OCI-LY7 (cell line): ENCODE measurements at regions of chr9 and their contacts with region 1.

Region 1: DNA sequence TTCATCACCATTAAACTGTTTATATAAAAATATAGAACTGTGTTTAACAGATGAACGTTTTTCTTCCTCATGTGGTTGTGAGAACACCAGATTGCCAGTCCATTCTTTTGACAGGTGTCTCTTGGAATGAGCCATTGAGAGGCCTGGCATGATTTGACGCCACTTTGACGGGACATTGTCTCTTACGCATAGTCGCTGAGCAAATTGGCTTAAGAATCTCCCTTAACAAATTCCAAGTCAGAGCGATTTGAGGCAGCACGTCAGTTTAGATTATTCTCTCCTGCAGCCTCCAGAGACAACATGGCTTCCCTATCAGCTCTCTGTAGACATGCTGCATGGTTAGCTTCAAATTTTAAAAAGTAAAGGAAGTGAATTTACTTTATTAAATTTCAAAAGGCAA is 510.7 kb upstream of the ACO1 start:
- DNase-seq: no peak
- H3K4me3 ChIP-seq: no peak overlapping the region
- H3K27ac ChIP-seq: no peak overlapping the region
- H3K4me1 ChIP-seq: no peaks in the 10 kb centered on the region
- CTCF ChIP-seq: no peak

Region 2: GRCh38 chr9:31389075-31389474 is 484.6 kb before region 1 on chr9:
- CTCF ChIA-PET with region 1: no interaction called
- POLR2A ChIA-PET with region 1: no interaction called
- intact Hi-C with region 1: loop called (anchors 5 kb)
- DNase-seq: no peak
- H3K4me3 ChIP-seq: no peak overlapping the region
- H3K27ac ChIP-seq: no peak overlapping the region
- H3K4me1 ChIP-seq: no peaks in the 10 kb centered on the region
- CTCF ChIP-seq: no peak

Region 3: GRCh38 chr9:31854187-31854586 is 19.5 kb before region 1 on chr9:
- CTCF ChIA-PET with region 1: no interaction called
- POLR2A ChIA-PET with region 1: no interaction called
- intact Hi-C with region 1: no loop called
- DNase-seq: no peak
- H3K4me3 ChIP-seq: no peak overlapping the region
- H3K27ac ChIP-seq: no peak overlapping the region
- H3K4me1 ChIP-seq: no peaks in the 10 kb centered on the region
- CTCF ChIP-seq: no peak

Region 4: GRCh38 chr9:32069169-32069813 is 195.6 kb after region 1 on chr9:
- CTCF ChIA-PET with region 1: no interaction called
- POLR2A ChIA-PET with region 1: no interaction called
- intact Hi-C with region 1: loop called (anchors 10 kb)
- DNase-seq: peak; percentile 15
- H3K4me3 ChIP-seq: no peak overlapping the region
- H3K27ac ChIP-seq: no peak overlapping the region
- H3K4me1 ChIP-seq: no peaks in the 10 kb centered on the region
- CTCF ChIP-seq: peak; percentile 81